Uterus (tissue), 4 donors: ENCODE measurements at regions of chr5 and their contacts with region 1.

Region 1: DNA sequence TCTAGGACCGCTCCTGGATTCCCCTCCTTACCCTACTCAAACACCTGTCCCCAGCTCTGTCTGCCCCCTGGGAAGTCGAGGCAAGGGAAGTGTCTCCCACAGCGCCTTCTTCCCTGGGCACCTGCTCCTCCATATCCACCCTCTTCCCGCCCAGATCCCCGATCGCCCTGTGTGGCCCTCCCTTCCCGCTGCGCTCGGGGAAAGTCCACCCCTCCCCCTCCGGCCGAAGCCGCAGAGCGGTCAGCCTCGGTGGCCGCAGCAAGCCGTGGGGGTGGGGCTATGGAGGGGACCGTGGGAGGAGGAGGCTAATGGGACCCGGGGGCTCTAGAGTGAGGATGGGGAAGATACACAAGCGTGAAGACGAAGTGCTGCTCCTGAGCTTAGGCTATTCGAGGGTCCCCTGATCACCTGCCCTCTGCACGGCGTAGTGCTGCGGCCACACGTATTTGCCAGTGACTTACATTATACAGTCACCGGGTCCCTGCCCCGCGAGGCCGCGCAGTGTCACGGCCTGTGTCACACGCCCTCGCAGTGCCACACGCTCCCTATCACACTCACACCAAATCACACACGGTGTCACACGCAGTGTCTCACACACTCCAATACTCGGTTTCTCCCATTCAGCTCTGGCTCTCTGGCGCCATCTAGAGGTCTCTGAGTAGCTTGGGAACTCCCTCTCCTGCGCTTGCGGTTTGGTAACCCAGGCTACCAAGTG is 658 bp upstream of the PCDH1 start:
- DNase-seq: peak; percentile 84 to 90
- H3K4me3 ChIP-seq: peak overlapping the region; percentile 47 to 59
- H3K27ac ChIP-seq: peak overlapping the region; percentile 63 to 81
- H3K4me1 ChIP-seq: peaks cover 0 to 20% of the 10 kb centered on the region in 2 donors
- H3K27me3 ChIP-seq: peaks cover 21 to 27% of the 10 kb centered on the region in 2 donors
- CTCF ChIP-seq: peak; percentile 93 to 96 (median 95)
- POLR2A ChIP-seq: no peak

Region 2: DNA sequence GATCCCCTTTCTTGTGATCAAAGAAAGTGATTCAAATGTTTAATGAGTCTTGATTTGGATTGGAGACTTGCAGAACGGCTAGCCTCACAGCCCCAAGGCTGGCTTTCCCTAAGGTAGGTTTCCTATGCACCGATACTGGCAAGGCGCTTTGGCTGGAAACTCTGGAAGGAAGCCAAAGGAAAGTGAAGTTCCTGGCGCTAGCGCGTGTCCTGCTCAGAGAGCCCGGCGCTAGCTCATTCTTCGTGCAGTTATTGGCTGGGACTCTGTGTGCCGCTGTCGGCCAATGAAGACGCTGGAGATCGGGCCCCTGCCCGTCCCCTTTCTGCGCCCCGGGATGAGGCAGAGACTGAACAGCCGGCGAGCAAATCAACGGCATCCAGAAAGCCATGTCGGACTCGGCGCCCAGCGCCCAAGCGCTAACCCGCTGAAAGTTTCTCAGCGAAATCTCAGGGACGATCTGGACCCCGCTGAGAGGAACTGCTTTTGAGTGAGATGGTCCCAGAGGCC is 403.2 kb before region 1 on chr5 and contains the start of gene PCDHGC3:
- intact Hi-C with region 1: no loop called
- DNase-seq: peak; percentile 95
- H3K4me3 ChIP-seq: peak within 1 kb of the TSS; percentile 54 to 55
- H3K27ac ChIP-seq: peak within 1 kb of the TSS; percentile 90 to 92
- H3K4me1 ChIP-seq: peaks cover 15 to 21% of the 10 kb centered on the region in 2 donors
- H3K27me3 ChIP-seq: no peaks in the 10 kb centered on the region
- CTCF ChIP-seq: peak; percentile 58 to 80 (median 66)
- POLR2A ChIP-seq: peak; percentile 70 to 74
- total RNA-seq, gene PCDHGC3: 25.9 to 146 (median 123) TPM

Region 3: GRCh38 chr5:141701360-141702119 is 177.3 kb before region 1 on chr5:
- intact Hi-C with region 1: loop called (anchors 5 kb)
- DNase-seq: no peak
- H3K4me3 ChIP-seq: no peak overlapping the region
- H3K27ac ChIP-seq: no peak overlapping the region
- H3K4me1 ChIP-seq: no peaks in the 10 kb centered on the region
- H3K27me3 ChIP-seq: no peaks in the 10 kb centered on the region
- CTCF ChIP-seq: no peak
- POLR2A ChIP-seq: no peak

Region 4: DNA sequence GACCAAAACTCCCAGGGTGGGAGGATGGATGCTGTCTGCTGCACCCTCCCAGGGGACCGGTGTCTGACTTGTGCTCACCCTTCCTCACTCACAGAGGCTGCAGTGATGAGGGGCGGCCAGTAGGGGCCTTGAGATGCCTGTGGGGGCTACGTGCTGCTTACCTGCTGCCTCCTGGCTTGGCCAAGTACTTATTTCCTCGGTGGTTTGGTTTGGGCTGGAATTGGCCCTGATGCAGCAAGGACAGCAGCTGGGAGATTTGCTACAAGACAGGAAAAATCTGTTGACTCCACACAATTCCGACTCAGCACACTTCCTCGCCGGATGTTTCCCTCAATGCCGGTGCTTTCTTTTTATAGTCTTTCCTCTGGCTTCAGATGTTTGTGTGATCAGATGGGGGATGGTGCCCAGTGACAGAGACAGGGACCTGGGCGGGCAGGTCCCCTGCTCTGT is 72.5 kb after region 1 on chr5:
- intact Hi-C with region 1: loop called (anchors 10 kb)
- DNase-seq: no peak
- H3K4me3 ChIP-seq: no peak overlapping the region
- H3K27ac ChIP-seq: no peak overlapping the region
- H3K4me1 ChIP-seq: no peaks in the 10 kb centered on the region
- H3K27me3 ChIP-seq: no peaks in the 10 kb centered on the region
- CTCF ChIP-seq: no peak
- POLR2A ChIP-seq: no peak

Region 5: DNA sequence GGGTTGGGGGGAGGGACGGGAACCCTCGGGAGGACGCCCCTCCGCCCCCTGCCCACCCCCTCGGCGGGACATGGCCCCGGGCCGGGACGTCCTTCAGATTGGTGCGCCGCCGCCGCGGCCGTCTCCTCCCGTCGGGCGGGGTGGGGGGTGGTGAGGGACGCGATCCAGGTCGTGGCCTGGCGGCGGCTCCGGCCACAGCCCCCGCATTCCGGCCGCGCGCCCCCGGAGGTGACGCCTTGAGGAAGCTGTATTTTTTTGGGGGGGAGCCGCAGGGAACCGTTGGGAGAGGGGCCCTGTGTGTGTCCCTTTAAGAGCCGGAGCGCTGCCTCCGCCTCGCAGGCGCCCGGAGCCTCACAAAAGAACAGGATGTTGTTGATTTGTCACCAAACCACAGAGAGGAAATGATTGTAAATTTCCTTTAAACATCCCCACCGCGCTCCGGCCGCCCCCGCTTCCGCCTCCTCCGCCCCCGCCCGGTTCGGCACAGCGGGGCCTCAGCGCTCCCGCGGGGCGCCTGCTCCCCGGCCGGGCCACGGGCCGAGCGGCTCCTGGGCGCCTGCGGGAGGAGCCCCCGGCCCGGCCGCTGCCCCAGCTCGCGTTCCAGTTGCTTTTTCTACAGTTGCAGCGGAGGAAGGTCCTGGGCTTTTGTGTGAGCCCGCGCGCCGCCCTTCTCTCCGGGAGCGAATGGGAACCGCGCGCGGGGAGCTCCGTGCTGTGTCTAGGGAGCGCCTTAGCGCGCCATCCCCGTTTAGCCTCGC is 478.0 kb after region 1 on chr5:
- intact Hi-C with region 1: no loop called
- DNase-seq: peak; percentile 86 to 89
- H3K4me3 ChIP-seq: peak overlapping the region; percentile 49 to 67
- H3K27ac ChIP-seq: peak overlapping the region; percentile 95
- H3K4me1 ChIP-seq: no peaks in the 10 kb centered on the region
- H3K27me3 ChIP-seq: no peaks in the 10 kb centered on the region
- CTCF ChIP-seq: no peak
- POLR2A ChIP-seq: peak in 1 of 2 donors; percentile 75

Region 6: DNA sequence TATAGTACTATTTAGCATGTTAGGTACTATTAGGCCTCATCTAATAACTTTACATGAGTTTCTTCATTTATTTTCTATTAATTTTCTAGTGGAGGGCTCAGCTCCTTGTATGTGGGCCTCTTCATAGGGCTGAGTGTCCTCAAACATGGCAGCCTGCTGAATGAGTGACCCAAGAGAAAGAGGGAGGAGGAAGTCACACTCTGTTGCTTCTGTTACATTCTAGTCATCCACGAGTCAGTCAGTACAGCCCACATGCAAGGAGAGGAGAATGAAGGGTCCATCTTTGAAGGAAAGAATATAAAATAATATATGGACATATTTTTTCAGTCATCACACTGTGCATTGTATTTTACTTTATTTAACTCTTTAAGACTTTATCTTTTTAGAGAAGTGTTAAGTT is 1591.3 kb after region 1 on chr5:
- intact Hi-C with region 1: no loop called
- DNase-seq: no peak
- H3K4me3 ChIP-seq: no peak overlapping the region
- H3K27ac ChIP-seq: no peak overlapping the region
- H3K4me1 ChIP-seq: no peaks in the 10 kb centered on the region
- H3K27me3 ChIP-seq: no peaks in the 10 kb centered on the region
- CTCF ChIP-seq: no peak
- POLR2A ChIP-seq: no peak